ENCODE measurements at regions of chr10 and their contacts with region 1.

Region 1: DNA sequence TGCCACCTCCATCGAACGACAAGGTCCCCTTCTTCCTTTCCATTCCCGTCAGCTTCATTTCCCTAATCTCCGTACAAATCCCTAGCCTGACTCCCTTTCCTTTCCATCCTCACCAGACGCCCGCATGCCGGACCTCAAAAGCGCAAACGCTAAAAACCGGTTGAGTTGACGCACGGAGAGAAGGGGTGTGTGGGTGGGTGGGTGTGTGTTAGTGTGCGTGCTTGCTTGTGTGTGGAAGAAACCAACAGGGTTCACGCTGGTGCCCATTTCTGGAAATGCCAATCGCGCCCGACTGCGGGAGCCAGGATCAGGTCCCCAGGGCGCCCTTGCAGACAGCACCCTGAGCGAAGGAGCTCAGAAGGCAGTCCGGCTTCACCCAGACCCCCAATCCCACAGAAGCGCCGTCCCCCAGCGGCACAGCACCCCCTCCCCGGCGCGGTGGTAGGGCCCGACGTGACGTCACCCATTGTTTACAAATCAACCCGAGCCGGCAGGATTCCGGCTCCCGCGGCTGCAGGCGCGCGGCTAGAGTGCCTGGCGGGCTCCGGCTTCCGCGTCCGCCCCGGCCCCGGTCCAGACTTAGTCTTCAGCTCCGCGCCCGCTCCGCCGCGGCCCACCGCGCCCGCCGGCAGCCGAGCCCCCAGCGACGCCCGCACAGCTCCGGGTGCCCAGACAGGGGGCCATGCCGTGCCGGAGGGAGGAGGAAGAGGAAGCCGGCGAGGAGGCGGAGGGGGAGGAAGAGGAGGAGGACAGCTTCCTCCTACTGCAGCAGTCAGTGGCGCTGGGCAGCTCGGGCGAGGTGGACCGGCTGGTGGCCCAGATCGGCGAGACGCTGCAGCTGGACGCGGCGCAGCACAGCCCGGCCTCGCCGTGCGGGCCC is at the start of gene FRAT1:
- DNase-seq: peak; percentile 98
- ATAC-seq: peak; percentile 68
- H3K4me3 ChIP-seq: peak within 1 kb of the TSS; percentile 57 to 86 (median 79)
- H3K4me3 Mint-ChIP-seq: peak within 1 kb of the TSS; percentile 98
- H3K27ac ChIP-seq: peak within 1 kb of the TSS; percentile 97 to 100
- H3K27ac Mint-ChIP-seq: peak within 1 kb of the TSS; percentile 100
- H3K4me1 ChIP-seq: peaks cover 18 to 28% of the 10 kb centered on the region in 2 donors
- H3K4me1 Mint-ChIP-seq: peaks cover 33% of the 10 kb centered on the region
- H3K27me3 ChIP-seq: no peaks in the 10 kb centered on the region
- H3K27me3 Mint-ChIP-seq: no peaks in the 10 kb centered on the region
- CTCF ChIP-seq: no peak
- total RNA-seq, gene FRAT1: 25.3 and 27.8 TPM in 2 replicates

Region 2: GRCh38 chr10:97292097-97292862 is 26.7 kb before region 1 on chr10 and contains the start of gene ARHGAP19:
- CTCF ChIA-PET with region 1: interaction called, 4 read pairs
- POLR2A ChIA-PET with region 1: no interaction called
- intact Hi-C with region 1: loop called (anchors 1 kb)
- DNase-seq: peak; percentile 96
- ATAC-seq: peak; percentile 98
- H3K4me3 ChIP-seq: peak within 1 kb of the TSS; percentile 63 to 98 (median 91)
- H3K4me3 Mint-ChIP-seq: peak within 1 kb of the TSS; percentile 90
- H3K27ac ChIP-seq: peak within 1 kb of the TSS; percentile 48 to 85
- H3K27ac Mint-ChIP-seq: peak within 1 kb of the TSS; percentile 86
- H3K4me1 ChIP-seq: peaks cover 6 to 12% of the 10 kb centered on the region in 2 donors
- H3K4me1 Mint-ChIP-seq: peaks cover 16% of the 10 kb centered on the region
- H3K27me3 ChIP-seq: no peaks in the 10 kb centered on the region
- H3K27me3 Mint-ChIP-seq: no peaks in the 10 kb centered on the region
- CTCF ChIP-seq: no peak
- total RNA-seq, gene ARHGAP19: 21.7 and 22.5 TPM in 2 replicates

Region 3: DNA sequence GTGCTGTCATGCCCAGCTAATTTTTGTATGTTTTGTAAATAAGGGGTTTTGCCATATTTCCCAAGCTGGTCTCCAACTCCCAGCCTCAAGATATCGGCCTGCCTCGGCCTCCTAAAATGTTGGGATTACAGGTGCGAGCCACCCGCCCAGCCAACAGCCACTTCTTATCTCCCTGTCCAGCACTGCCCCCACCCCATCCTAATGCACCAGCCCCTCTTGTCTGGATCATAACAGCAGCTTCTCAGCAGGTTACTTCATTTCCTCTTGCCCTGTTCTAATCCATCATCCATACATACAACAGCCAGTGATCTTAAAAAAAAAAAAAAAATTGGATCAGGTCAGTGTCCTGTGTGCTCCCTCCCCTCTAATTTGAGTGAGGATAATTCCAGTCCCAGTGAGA is 28.3 kb after region 1 on chr10:
- CTCF ChIA-PET with region 1: no interaction called
- POLR2A ChIA-PET with region 1: no interaction called
- intact Hi-C with region 1: no loop called
- DNase-seq: no peak
- ATAC-seq: no peak
- H3K4me3 ChIP-seq: no peak overlapping the region
- H3K4me3 Mint-ChIP-seq: no peak overlapping the region
- H3K27ac ChIP-seq: no peak overlapping the region
- H3K27ac Mint-ChIP-seq: no peak overlapping the region
- H3K4me1 ChIP-seq: no peaks in the 10 kb centered on the region
- H3K4me1 Mint-ChIP-seq: no peaks in the 10 kb centered on the region
- H3K27me3 ChIP-seq: no peaks in the 10 kb centered on the region
- H3K27me3 Mint-ChIP-seq: no peaks in the 10 kb centered on the region
- CTCF ChIP-seq: no peak

Measured in B cell (primary cell).